A673 (cell line): ENCODE measurements at regions of chr18 and their contacts with region 1.

Region 1: DNA sequence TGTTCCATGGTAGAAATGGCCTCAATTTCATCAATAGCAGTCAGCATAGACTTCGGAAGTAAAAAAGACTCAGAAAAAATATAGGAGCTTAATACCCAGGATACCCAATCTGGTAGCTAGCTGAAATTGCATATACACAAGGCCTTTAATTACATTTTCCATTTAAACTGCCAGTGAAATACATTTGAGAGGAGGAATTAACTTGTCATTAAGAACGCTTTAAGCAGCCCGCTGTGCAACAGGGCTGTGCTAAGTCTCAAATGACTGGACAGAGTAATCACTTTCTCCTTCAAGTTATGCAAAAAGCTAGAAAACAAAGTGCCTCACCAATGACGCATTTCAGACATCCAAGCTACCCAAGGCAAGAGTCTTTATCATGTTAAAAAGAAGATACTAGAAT is 558.8 kb downstream of the MBD2 start:
- DNase-seq: no peak
- H3K4me3 ChIP-seq: no peak overlapping the region
- H3K27ac ChIP-seq: no peak overlapping the region
- H3K4me1 ChIP-seq: no peaks in the 10 kb centered on the region
- H3K27me3 ChIP-seq: no peaks in the 10 kb centered on the region
- CTCF ChIP-seq: no peak

Region 2: GRCh38 chr18:53586923-53587322 is 78.8 kb before region 1 on chr18:
- CTCF ChIA-PET with region 1: no interaction called
- POLR2A ChIA-PET with region 1: no interaction called
- intact Hi-C with region 1: loop called (anchors 10 kb)
- DNase-seq: no peak
- H3K4me3 ChIP-seq: no peak overlapping the region
- H3K27ac ChIP-seq: no peak overlapping the region
- H3K4me1 ChIP-seq: no peaks in the 10 kb centered on the region
- H3K27me3 ChIP-seq: no peaks in the 10 kb centered on the region
- CTCF ChIP-seq: no peak

Region 3: GRCh38 chr18:53739700-53740099 is 74.0 kb after region 1 on chr18:
- CTCF ChIA-PET with region 1: no interaction called
- POLR2A ChIA-PET with region 1: no interaction called
- intact Hi-C with region 1: no loop called
- DNase-seq: no peak
- H3K4me3 ChIP-seq: no peak overlapping the region
- H3K27ac ChIP-seq: no peak overlapping the region
- H3K4me1 ChIP-seq: no peaks in the 10 kb centered on the region
- H3K27me3 ChIP-seq: no peaks in the 10 kb centered on the region
- CTCF ChIP-seq: no peak